GM10248 (cell line): ENCODE measurements at regions of chr20 and their contacts with region 1.

Region 1: GRCh38 chr20:44683263-44684046 is 31.7 kb upstream of the CCN5 start:
- DNase-seq: peak; percentile 83
- CTCF ChIP-seq: peak; percentile 76

Region 2: DNA sequence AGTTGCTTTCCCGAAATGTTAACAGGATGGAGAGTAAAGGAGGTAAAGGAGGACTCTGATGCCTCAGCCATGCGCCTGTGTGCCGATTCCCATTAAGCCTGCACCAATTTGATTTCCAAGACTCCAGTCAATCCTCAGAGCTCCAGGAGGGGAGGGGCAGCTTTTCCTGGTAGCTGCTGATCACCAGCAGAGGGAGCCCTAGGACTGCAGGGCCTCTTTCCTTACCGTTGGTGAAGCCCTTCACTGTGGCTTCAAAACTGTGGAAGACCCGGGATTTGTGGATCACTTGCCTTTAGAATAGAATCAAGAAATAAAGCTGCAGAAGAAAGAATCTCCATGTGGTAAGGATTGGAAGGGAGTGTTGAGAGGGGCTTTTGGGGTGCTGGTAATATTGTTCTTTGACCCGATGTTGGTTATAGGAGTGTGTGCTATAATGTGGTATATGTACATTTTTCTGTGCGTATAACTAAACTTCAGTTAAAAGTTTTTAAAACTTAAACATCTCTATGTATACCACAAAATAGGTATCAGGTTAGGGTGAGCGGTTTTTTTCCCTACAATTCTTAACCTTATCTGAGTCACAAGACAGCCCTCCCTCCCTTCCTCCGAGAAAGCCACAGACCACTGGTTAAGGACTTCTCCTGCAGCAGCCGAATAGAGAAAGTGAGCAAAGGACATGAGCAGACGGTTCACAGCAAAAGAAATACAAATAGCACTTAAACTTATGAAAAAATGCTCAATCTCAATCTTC is 465.9 kb before region 1 on chr20:
- CTCF ChIA-PET with region 1: interaction called, 17 read pairs
- POLR2A ChIA-PET with region 1: no interaction called
- DNase-seq: peak; percentile 44
- CTCF ChIP-seq: peak; percentile 91

Region 3: DNA sequence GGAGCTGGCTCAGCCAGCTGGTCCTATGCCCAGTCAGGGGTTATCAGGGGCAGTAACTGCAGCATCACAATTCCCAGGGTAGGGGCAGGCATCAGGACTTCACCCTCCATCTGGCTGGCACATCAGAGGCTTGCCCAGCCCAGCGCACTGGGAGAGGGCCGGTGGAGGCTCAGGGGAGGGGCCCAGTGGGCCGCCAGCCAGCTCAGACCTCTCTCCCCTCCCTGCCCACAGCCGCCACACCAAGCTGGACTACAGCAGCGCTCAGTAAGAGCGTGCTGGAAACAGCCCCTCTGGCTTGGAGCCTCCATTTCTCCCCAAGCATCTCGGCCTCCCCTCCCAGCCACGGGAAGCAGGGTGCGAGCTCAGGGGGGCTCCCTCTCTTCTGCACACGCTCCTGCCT is 53.9 kb before region 1 on chr20:
- CTCF ChIA-PET with region 1: interaction called, 15 read pairs
- POLR2A ChIA-PET with region 1: no interaction called
- DNase-seq: no peak
- CTCF ChIP-seq: no peak

Region 4: DNA sequence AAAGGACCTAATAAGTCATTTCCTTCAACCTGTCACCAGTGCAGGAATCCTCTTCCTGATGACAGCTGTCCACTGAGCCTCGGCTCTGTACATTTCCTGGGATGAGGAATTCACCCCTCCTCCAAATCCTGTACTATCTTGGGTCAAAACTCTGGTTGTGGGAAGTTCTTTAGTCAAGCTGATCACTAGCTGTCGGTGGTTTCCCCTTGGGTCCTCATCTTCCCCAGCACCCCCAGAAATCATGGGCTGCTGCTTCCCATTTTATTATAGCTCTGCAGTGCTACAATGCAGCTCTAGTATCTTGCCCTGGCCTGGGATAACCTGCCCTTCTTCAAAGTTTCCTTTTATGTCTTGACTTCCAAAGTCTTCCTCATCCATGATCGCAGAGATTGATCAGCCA is 17.4 kb before region 1 on chr20:
- CTCF ChIA-PET with region 1: interaction called, 39 read pairs
- POLR2A ChIA-PET with region 1: no interaction called
- DNase-seq: no peak
- CTCF ChIP-seq: no peak

Region 5: DNA sequence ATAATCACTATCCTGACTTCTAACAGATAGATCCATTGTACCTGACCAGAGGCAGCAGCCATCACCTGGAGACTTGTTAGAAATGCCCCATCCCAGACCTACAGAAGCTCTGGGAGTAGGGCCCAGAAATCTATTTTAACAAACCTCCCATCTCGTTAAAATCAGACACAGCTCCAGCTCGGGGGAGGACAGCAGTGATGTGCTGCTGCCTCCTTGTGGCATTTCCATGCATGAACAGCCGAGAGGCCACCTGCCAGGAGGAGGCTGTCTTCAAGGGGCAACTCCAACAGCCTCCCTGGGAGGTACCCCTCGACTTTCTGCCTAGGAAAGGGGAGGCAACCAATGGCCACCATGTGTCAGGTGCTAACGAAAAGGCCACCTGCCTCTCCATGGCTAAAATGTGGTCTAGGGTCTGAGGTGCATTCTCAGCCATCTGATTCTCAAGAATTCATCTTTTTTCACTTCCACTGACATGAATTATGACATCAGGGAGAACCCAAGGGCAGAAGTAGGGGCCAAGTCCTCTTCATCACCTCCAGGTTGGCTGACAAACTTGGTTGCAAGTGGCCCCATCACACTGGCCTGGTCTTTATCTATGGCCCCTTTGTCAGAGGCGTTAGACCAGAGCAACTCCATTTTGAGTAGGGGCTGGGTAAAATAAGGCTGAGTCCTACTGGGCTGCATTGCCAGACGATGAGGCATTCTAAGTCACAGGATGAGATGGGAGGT is 50.0 kb after region 1 on chr20:
- CTCF ChIA-PET with region 1: interaction called, 178 read pairs
- POLR2A ChIA-PET with region 1: no interaction called
- DNase-seq: peak; percentile 74
- CTCF ChIP-seq: peak; percentile 88

Region 6: DNA sequence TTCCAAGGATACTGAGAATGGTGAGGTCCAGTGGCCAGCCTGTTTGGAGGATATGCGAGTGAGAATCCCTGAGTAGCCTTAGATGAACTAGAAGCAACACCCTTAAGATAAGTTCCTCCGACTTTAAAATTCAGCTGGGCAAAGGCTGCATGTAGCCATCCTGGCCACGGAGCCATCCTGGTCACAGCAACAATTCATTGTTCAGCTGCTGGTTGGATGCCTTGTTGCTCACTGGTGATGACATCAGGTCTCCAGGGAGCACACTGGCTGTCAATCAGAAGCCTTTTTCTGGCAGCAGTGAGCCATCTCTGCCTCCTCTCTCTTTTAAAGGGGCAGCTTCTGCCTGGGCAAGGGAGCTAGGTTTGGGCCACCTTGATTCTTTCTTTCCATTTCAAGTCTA is 149.3 kb after region 1 on chr20:
- CTCF ChIA-PET with region 1: no interaction called
- POLR2A ChIA-PET with region 1: no interaction called
- DNase-seq: no peak
- CTCF ChIP-seq: no peak

Region 7: GRCh38 chr20:44866703-44867335 is 183.4 kb after region 1 on chr20:
- CTCF ChIA-PET with region 1: interaction called, 26 read pairs
- POLR2A ChIA-PET with region 1: no interaction called
- DNase-seq: no peak
- CTCF ChIP-seq: no peak

Region 8: DNA sequence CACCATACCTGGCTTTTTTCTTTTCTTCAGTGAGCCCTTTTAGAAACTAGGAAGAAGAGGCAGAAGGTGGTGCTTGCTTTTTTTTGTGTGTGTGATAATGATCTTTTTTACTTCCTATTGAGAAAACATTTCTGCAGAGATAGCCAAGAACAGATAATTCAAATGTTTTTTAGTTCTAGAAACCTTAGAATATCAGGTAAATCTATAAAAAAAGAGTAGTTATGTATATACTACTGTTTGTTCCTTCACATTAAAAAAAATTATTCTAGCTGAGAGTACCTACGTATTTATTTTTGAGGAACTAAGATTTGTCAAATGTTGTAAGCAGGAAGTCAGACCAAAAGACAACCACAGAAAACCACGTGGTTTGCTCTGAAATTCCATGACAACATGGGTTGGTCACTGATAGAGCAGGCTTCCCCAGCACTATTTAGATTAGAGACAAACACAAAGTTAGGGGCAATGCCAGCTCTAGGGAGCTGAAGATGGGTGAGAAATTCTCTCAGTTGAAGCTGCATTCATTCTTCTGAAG is 295.7 kb after region 1 on chr20:
- CTCF ChIA-PET with region 1: no interaction called
- POLR2A ChIA-PET with region 1: no interaction called
- DNase-seq: peak; percentile 65
- CTCF ChIP-seq: no peak

Region 9: DNA sequence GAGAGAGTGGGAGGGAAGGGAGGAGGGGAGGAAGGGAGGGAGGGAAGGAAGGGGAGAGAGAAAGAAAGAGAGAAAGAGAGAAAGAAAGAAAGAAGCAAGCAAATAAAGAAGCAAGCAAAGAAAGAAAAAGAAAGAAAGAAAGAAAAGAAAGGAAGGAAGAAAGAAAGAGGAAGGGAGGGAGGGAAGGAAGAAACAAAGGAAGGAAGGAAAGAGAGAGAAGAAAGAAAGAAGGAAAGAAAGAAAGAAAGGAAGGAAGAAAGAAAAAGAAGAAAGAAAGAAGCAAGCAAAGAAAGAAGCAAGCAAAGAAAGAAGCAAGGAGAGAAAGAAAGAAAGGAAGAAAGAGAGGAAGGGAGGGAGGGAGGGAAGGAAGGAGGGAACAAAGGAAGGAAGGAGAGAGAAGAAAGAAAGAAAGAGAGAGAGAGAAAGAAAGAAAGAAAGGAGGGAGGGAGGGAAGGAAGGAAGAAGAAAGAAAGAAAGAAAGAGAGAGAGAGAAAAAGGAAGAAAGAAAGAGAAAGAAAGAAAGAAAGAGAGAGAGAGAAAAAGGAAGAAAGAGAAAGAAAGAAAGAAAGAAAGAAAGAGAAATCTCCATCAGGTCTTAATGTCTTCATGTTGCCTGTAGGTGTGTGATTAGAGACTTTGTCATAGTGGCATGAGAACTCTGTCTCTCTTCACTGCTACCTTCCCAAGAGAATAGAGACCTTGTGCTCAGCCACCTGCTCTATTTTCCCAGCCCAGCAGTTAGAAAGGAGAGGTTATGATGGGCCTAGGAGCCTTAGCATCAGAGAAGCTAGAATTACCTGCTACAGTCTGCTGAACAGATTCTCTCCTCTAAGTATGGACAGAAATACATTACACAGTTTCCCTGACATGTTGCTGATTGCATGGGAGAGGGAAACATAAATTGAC is 528.4 kb after region 1 on chr20:
- CTCF ChIA-PET with region 1: no interaction called
- POLR2A ChIA-PET with region 1: no interaction called
- DNase-seq: no peak
- CTCF ChIP-seq: no peak